GM12878 (cell line): ENCODE measurements at regions of chr9 and their contacts with region 1.

Region 1: DNA sequence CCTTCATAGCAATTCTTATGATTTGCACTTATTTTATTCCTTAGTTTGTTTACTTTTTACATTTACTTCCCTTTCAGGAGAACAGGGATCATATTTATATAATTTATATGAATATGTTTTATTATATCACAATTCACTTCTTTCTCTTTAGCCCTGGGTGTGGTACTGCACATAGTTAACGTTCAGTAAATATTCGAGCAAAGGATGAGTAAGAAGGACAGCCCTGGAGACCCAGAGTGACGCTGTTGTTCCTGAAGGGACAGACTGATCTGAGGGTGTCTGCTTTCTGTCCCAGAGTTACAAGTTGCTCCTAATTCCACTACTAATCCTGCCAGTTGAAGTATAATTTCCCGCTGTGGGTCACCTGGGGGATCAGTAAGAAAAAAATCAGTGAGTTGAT is 366.1 kb downstream of the DMRT2 start:
- DNase-seq: no peak
- ATAC-seq: no peak
- H3K4me3 ChIP-seq: no peak overlapping the region
- H3K27ac ChIP-seq: no peak overlapping the region
- H3K4me1 ChIP-seq: no peaks in the 10 kb centered on the region
- H3K27me3 ChIP-seq: no peaks in the 10 kb centered on the region
- CTCF ChIP-seq: no peak
- EP300 ChIP-seq: no peak
- POLR2A ChIP-seq: no peak
- RAD21 ChIP-seq: no peak

Region 2: DNA sequence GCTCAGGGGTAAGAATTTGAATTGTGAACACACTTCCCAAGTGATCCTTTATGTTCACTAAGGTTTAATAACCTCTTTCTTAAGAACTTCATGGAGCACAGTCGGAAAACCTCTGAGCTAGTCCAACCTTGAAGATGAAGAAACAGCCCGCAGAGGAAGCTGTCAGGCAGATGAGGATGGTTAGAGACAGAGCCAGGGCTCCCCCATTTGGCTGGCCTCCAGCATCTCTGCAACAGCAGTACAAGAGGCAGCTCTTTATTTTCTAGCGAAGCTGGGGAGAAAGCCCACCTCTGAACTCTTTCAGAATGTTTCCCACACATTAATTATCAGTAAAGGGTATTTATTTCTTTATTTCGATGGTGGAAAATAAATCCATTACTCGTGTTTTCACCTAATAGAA is 15.3 kb before region 1 on chr9:
- CTCF ChIA-PET with region 1: interaction called, 17 read pairs
- POLR2A ChIA-PET with region 1: no interaction called
- RAD21 ChIA-PET with region 1: interaction called, 4 read pairs
- SMC1A ChIA-PET with region 1: interaction called, 22 read pairs
- in situ Hi-C with region 1: no loop called
- intact Hi-C with region 1: no loop called
- DNase-seq: no peak
- ATAC-seq: peak; percentile 67
- H3K4me3 ChIP-seq: no peak overlapping the region
- H3K27ac ChIP-seq: no peak overlapping the region
- H3K4me1 ChIP-seq: no peaks in the 10 kb centered on the region
- H3K27me3 ChIP-seq: no peaks in the 10 kb centered on the region
- CTCF ChIP-seq: peak in 1 of 3 experiments; percentile 26; a peak in 2 of 6 replicates
- EP300 ChIP-seq: no peak
- POLR2A ChIP-seq: no peak
- RAD21 ChIP-seq: no peak